HepG2 (cell line): ENCODE measurements at regions of chr5 and their contacts with region 1.

Region 1: DNA sequence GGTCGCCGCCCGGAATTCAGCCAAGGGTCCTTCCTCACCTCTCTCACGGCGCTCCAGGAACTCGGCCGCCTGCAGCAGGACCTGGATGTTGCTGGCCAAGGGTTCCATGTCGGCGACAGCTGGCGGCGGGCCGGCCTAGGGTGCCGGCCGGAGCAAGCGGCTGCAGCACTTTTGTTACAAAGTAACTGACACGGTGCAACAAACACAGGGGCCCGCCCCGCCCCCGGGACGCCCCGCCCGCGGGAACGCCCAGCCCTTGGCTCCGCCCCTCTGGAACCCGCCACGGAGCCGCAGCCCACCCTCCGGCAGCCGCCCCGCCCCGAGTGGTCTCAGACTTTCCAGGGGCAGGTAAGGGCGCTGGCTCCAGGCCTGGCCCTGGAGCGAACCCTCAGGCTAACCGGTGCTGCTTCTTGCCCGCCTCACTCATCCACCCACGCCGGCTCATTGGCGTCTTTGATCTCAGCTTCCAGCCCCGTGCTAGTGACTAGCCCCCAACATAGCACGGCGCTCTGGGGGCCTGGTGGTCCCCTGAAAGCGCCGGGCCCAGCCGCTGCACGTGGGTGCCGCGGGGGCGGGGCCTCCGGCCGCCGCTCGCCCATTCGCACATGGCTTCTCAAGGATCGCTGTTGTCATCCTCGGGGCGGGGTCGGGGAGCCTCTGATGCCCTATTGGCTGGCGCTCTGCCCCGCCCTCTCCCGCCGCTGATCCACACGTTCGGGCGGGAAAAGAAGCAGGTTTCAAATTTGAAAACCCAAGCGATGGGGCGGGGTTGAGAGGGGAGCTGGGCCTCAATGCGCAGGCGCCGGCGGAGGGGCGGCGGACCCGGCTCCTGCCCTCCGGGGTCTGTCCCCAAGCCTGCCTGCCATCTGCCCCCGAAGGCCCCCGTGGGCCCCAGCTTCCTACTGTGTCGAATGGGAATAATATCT is at the start of gene MXD3:
- DNase-seq: peak; percentile 94
- ATAC-seq: peak; percentile 71
- H3K4me3 ChIP-seq: peak within 1 kb of the TSS; percentile 63 to 79 (median 75)
- H3K27ac ChIP-seq: peak within 1 kb of the TSS; percentile 95
- H3K4me1 ChIP-seq: peaks cover 51% of the 10 kb centered on the region
- H3K27me3 ChIP-seq: no peaks in the 10 kb centered on the region
- CTCF ChIP-seq: no peak
- EP300 ChIP-seq: peak in 1 of 2 experiments; percentile 34; a peak in 1 of 4 replicates
- POLR2A ChIP-seq: peak in 1 of 2 experiments; percentile 46; a peak in 1 of 4 replicates
- RAD21 ChIP-seq: no peak
- total RNA-seq, gene MXD3: 9.9 and 12.8 TPM in 2 replicates

Region 2: GRCh38 chr5:177336112-177336511 is 24.1 kb after region 1 on chr5:
- CTCF ChIA-PET with region 1: interaction called, 9 read pairs
- POLR2A ChIA-PET with region 1: no interaction called
- in situ Hi-C with region 1: no loop called
- intact Hi-C with region 1: loop called (anchors 2 kb)
- DNase-seq: peak; percentile 50
- ATAC-seq: peak; percentile 88
- H3K4me3 ChIP-seq: no peak overlapping the region
- H3K27ac ChIP-seq: no peak overlapping the region
- H3K4me1 ChIP-seq: no peaks in the 10 kb centered on the region
- H3K27me3 ChIP-seq: no peaks in the 10 kb centered on the region
- CTCF ChIP-seq: peak; percentile 79
- EP300 ChIP-seq: no peak
- POLR2A ChIP-seq: no peak
- RAD21 ChIP-seq: peak; percentile 87

Region 3: GRCh38 chr5:177362610-177363507 is 50.9 kb after region 1 on chr5:
- CTCF ChIA-PET with region 1: interaction called, 3 read pairs
- POLR2A ChIA-PET with region 1: interaction called, 4 read pairs
- in situ Hi-C with region 1: loop called (anchors 5 kb)
- intact Hi-C with region 1: loop called (anchors 5 kb)
- DNase-seq: no peak
- ATAC-seq: peak; percentile 24
- H3K4me3 ChIP-seq: peak overlapping the region; percentile 57 to 81 (median 60)
- H3K27ac ChIP-seq: no peak overlapping the region
- H3K4me1 ChIP-seq: peaks cover 95% of the 10 kb centered on the region
- H3K27me3 ChIP-seq: peaks cover 0 to 23% of the 10 kb centered on the region in 2 experiments; a peak in 4 of 5 replicates
- CTCF ChIP-seq: peak; percentile 14; the same call in 1 of the 2 replicates
- EP300 ChIP-seq: no peak
- POLR2A ChIP-seq: no peak
- RAD21 ChIP-seq: no peak

Region 4: GRCh38 chr5:177446200-177447065 is 134.4 kb after region 1 on chr5 and contains the start of gene PRR7:
- CTCF ChIA-PET with region 1: no interaction called
- POLR2A ChIA-PET with region 1: no interaction called
- in situ Hi-C with region 1: loop called (anchors 5 kb)
- intact Hi-C with region 1: no loop called
- DNase-seq: no peak
- ATAC-seq: peak; percentile 27
- H3K4me3 ChIP-seq: peak within 1 kb of the TSS; percentile 55 to 80 (median 61)
- H3K27ac ChIP-seq: peak within 1 kb of the TSS; percentile 74
- H3K4me1 ChIP-seq: peaks cover 49% of the 10 kb centered on the region
- H3K27me3 ChIP-seq: no peaks in the 10 kb centered on the region
- CTCF ChIP-seq: peak; percentile 18
- EP300 ChIP-seq: no peak
- POLR2A ChIP-seq: peak in 1 of 2 experiments; percentile 41; a peak in 1 of 4 replicates
- RAD21 ChIP-seq: peak; percentile 65
- total RNA-seq, gene PRR7: 3.9 and 5.0 TPM in 2 replicates